Caco-2 (cell line): ENCODE measurements at regions of chr16 and their contacts with region 1.

Region 1: DNA sequence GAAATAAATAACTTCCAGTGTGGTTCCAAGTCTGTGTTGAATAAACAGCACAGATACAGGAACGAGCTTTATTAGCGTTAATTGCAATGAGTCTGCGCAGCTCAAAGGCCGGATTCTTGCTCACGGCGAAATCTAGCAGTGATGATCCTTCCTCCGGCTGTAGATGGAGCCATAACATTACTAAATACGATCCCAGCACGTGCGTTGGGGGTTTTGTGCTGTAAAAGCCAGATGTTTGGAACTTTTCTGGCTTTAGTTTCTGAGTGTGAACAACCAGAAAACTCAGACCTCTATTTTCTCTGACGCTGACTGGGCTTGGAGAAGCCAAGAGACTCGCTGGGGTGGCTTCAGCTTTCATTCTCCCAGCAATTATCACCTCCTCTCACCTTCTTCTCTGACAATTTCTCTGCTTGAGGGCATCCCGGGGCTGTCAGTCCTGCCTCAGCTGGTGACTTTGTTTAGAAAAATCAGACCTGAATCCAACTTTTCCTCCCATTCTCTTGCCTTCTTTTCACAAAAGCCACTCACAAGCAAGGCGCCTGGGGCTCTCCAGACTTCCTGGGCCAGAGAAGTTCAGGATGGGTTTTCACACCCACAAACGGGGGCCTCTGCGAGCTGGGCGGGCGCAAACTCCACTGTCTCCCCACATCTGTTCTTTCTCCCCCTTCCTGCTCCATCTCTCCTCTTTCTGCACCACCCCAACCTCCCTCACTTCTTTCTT is 47.1 kb upstream of the AKTIP start:
- DNase-seq: peak; percentile 75 to 82
- H3K4me3 ChIP-seq: no peak overlapping the region
- H3K4me3 Mint-ChIP-seq: no peak overlapping the region
- H3K27ac Mint-ChIP-seq: peak overlapping the region; percentile 73
- H3K4me1 ChIP-seq: peaks cover 13% of the 10 kb centered on the region
- H3K4me1 Mint-ChIP-seq: peaks cover 12% of the 10 kb centered on the region
- H3K27me3 ChIP-seq: no peaks in the 10 kb centered on the region
- H3K27me3 Mint-ChIP-seq: no peaks in the 10 kb centered on the region
- CTCF ChIP-seq: peak; percentile 76

Region 2: GRCh38 chr16:53495325-53495724 is 54.8 kb before region 1 on chr16:
- CTCF ChIA-PET with region 1: no interaction called
- POLR2A ChIA-PET with region 1: no interaction called
- intact Hi-C with region 1: no loop called
- DNase-seq: no peak
- H3K4me3 ChIP-seq: no peak overlapping the region
- H3K4me3 Mint-ChIP-seq: no peak overlapping the region
- H3K27ac Mint-ChIP-seq: no peak overlapping the region
- H3K4me1 ChIP-seq: peaks cover under 1% of the 10 kb centered on the region; the same call in 1 of the 2 replicates
- H3K4me1 Mint-ChIP-seq: peaks cover 7% of the 10 kb centered on the region
- H3K27me3 ChIP-seq: no peaks in the 10 kb centered on the region
- H3K27me3 Mint-ChIP-seq: no peaks in the 10 kb centered on the region
- CTCF ChIP-seq: peak in 1 of 2 experiments; percentile 46

Region 3: DNA sequence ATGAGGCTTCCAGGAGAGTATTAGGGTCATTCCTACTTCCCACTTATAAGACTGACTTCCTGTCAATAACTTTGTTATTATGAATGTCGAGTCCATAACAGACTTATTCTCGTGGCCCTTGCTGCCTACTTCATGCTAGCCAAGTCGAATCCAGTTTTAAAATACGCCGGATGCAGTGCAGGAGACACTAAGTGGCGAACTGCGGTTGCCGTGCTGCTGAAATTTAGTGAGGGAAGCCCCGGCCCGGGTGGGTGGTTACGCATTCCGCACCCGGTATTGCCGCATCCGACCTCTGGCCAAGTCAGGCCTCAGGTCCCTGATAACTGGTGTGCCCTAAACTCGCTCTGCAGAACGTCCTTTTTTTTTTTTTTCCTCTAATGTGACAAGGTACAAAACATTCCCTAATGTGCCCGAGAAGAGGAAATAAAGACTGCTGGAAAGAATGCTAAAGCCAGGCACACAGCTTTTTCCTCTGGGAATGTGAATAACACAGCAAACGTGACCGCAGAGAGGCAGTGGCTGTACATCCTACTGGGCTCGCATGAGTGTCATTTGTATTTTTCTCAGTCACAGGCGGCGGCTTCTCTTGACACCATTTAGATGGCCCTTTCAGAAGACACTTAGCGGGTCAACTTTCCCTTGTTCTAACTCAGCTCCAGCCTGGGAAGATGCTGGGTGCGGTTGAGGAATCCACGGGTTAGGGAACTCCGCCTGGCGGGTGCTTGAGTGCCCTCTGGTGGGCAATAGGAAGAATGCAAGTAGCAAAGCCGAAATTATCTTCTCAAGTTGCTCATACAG is 40.0 kb before region 1 on chr16:
- CTCF ChIA-PET with region 1: interaction called, 8 read pairs
- POLR2A ChIA-PET with region 1: no interaction called
- intact Hi-C with region 1: loop called (anchors 1 kb)
- DNase-seq: peak; percentile 74 to 79
- H3K4me3 ChIP-seq: no peak overlapping the region
- H3K4me3 Mint-ChIP-seq: no peak overlapping the region
- H3K27ac Mint-ChIP-seq: peak overlapping the region; percentile 87
- H3K4me1 ChIP-seq: peaks cover 31% of the 10 kb centered on the region
- H3K4me1 Mint-ChIP-seq: peaks cover 23% of the 10 kb centered on the region
- H3K27me3 ChIP-seq: no peaks in the 10 kb centered on the region
- H3K27me3 Mint-ChIP-seq: no peaks in the 10 kb centered on the region
- CTCF ChIP-seq: peak; percentile 94 to 97

Region 4: GRCh38 chr16:53703590-53704444 is 153.7 kb after region 1 on chr16 and contains the starts of genes FTO and RPGRIP1L:
- CTCF ChIA-PET with region 1: interaction called, 14 read pairs
- POLR2A ChIA-PET with region 1: no interaction called
- intact Hi-C with region 1: no loop called
- DNase-seq: peak; percentile 100
- H3K4me3 ChIP-seq: peak within 1 kb of the TSS; percentile 82
- H3K4me3 Mint-ChIP-seq: peak within 1 kb of the TSS; percentile 89
- H3K27ac Mint-ChIP-seq: peak within 1 kb of the TSS; percentile 72
- H3K4me1 ChIP-seq: peaks cover 8% of the 10 kb centered on the region; the same call in 1 of the 2 replicates
- H3K4me1 Mint-ChIP-seq: no peaks in the 10 kb centered on the region
- H3K27me3 ChIP-seq: no peaks in the 10 kb centered on the region
- H3K27me3 Mint-ChIP-seq: no peaks in the 10 kb centered on the region
- CTCF ChIP-seq: no peak
- total RNA-seq, gene FTO: 76.3 and 78.3 TPM in 2 replicates
- total RNA-seq, gene RPGRIP1L: 16.1 and 17.8 TPM in 2 replicates

Region 5: DNA sequence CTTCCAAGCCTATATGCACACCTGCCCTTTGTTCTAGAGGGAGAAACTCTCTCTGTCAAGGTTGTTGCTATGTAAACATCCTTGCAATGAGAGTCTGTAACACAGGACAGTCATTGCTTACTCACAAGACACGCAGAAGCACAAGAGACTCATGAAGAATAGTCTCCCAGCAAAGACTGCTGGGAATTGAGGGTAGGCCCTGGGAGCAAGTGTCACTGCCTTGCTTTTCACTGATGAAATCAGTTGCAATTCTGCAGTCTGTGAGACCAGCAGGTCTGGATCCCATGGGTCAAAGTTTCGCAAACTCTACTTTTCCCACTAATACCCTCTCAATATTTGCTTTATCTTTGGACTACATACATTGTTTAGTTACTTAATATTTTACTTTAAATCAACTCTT is 331.2 kb after region 1 on chr16:
- CTCF ChIA-PET with region 1: no interaction called
- POLR2A ChIA-PET with region 1: no interaction called
- intact Hi-C with region 1: loop called (anchors 2 kb)
- DNase-seq: peak; percentile 77 to 91
- H3K4me3 ChIP-seq: no peak overlapping the region
- H3K4me3 Mint-ChIP-seq: no peak overlapping the region
- H3K27ac Mint-ChIP-seq: peak overlapping the region; percentile 84
- H3K4me1 ChIP-seq: peaks cover 37% of the 10 kb centered on the region
- H3K4me1 Mint-ChIP-seq: peaks cover 27% of the 10 kb centered on the region
- H3K27me3 ChIP-seq: no peaks in the 10 kb centered on the region
- H3K27me3 Mint-ChIP-seq: no peaks in the 10 kb centered on the region
- CTCF ChIP-seq: no peak

Region 6: GRCh38 chr16:54171626-54172525 is 621.7 kb after region 1 on chr16:
- CTCF ChIA-PET with region 1: no interaction called
- POLR2A ChIA-PET with region 1: no interaction called
- intact Hi-C with region 1: loop called (anchors 10 kb)
- DNase-seq: peak; percentile 69 to 76
- H3K4me3 ChIP-seq: peak overlapping the region; percentile 22
- H3K4me3 Mint-ChIP-seq: peak overlapping the region; percentile 54
- H3K27ac Mint-ChIP-seq: no peak overlapping the region
- H3K4me1 ChIP-seq: peaks cover 48% of the 10 kb centered on the region
- H3K4me1 Mint-ChIP-seq: peaks cover 39% of the 10 kb centered on the region
- H3K27me3 ChIP-seq: no peaks in the 10 kb centered on the region
- H3K27me3 Mint-ChIP-seq: no peaks in the 10 kb centered on the region
- CTCF ChIP-seq: no peak